Heart left ventricle (tissue), 16 donors: ENCODE measurements at regions of chrX and their contacts with region 1.

Region 1: DNA sequence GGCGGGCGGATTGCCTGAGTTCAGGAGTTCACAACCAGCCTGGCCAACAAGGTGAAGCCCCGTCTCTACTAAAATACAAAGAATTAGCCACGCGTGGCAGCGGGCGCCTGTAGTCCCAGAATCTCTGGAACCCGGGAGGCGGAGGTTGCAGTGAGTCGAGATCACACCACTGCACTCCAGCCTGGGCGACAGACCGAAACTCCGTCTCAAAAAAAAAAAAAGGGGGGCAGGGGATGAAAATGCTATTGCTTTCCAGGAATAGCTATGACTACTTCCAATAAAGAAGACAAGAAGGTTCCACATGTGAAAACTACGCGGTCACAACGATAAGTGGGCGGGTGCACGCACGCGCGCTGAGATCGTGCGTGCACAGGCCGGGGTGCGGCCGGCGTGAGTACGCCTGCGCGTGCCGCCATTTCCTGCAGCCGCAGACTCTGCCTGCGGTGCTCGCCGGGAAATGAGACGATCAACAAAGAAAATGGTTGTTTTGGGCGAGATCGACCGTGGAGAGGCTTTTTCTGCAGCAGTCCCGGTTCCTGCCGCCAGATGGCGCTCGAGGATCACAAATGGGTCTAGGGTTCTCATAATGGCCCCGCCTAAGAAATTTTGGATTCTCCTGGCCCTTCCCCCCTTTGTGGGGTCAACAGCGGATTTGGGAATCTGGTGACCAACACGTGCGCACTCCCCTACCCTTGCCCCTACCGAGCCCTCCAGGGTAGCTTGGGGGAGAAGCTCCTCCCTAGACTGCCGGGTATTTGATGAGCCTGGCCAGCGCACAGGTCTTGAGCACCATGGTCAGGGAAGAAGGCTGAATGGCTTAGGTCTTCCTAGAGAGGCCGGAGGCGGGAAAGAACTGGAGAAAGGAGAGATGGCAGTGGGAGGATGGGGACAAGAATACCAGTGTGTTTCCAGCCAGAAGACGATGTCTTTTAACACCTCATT is 35.1 kb downstream of the PNMA5 start:
- DNase-seq: peak; percentile 85 to 92 (median 88)
- ATAC-seq: peak; percentile 92 to 99 (median 98)
- H3K4me3 ChIP-seq: peak overlapping the region in 10 of 12 donors; percentile 19 to 51 (median 39)
- H3K27ac ChIP-seq: peak overlapping the region in 8 of 12 donors; percentile 47 to 74 (median 55)
- H3K4me1 ChIP-seq: peaks cover 0 to 8% (median 0%) of the 10 kb centered on the region in 12 donors
- H3K27me3 ChIP-seq: peaks cover 0 to 4% (median 0%) of the 10 kb centered on the region in 9 donors
- CTCF ChIP-seq: peak; percentile 71 to 92 (median 80)
- POLR2A ChIP-seq: no peak

Region 2: GRCh38 chrX:152941328-152942106 is 17.3 kb before region 1 on chrX:
- intact Hi-C with region 1: loop called in 1 of 10 experiments (anchors 1 kb)
- DNase-seq: peak; percentile 89 to 94 (median 93)
- ATAC-seq: peak; percentile 93 to 98 (median 94)
- H3K4me3 ChIP-seq: peak overlapping the region; percentile 16 to 71 (median 60)
- H3K27ac ChIP-seq: peak overlapping the region; percentile 5 to 86 (median 80)
- H3K4me1 ChIP-seq: peaks cover 0 to 12% (median 3%) of the 10 kb centered on the region in 12 donors
- H3K27me3 ChIP-seq: peaks cover 0 to 7% (median 0%) of the 10 kb centered on the region in 9 donors
- CTCF ChIP-seq: peak; percentile 63 to 87 (median 80)
- POLR2A ChIP-seq: peak in 1 of 2 donors; percentile 51

Region 3: DNA sequence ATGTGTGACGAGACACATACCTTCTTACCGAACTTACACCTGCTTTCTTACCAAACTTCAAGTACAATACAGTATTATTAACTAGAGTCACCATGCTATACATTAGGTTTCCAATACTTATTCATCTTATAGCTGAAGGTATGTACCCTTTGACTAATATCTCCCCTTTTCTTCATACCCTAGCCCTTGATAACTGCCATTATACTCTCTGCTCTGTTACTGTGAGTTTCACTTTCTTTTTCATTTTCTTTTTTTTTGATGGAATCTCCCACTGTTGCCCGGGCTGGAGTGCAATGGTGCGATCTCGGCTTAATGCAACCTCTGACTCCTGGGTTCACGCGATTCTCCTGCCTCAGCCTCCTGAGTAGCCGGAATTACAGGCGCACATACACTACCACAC is 38.5 kb after region 1 on chrX:
- intact Hi-C with region 1: no loop called
- DNase-seq: no peak
- ATAC-seq: no peak
- H3K4me3 ChIP-seq: no peak overlapping the region
- H3K27ac ChIP-seq: no peak overlapping the region
- H3K4me1 ChIP-seq: no peaks in the 10 kb centered on the region
- H3K27me3 ChIP-seq: no peaks in the 10 kb centered on the region
- CTCF ChIP-seq: no peak
- POLR2A ChIP-seq: no peak

Region 4: GRCh38 chrX:153238361-153238760 is 279.6 kb after region 1 on chrX:
- intact Hi-C with region 1: no loop called
- DNase-seq: no peak
- ATAC-seq: no peak
- H3K4me3 ChIP-seq: no peak overlapping the region
- H3K27ac ChIP-seq: no peak overlapping the region
- H3K4me1 ChIP-seq: no peaks in the 10 kb centered on the region
- H3K27me3 ChIP-seq: peaks cover 0 to 72% (median 0%) of the 10 kb centered on the region in 9 donors
- CTCF ChIP-seq: no peak
- POLR2A ChIP-seq: no peak

Region 5: DNA sequence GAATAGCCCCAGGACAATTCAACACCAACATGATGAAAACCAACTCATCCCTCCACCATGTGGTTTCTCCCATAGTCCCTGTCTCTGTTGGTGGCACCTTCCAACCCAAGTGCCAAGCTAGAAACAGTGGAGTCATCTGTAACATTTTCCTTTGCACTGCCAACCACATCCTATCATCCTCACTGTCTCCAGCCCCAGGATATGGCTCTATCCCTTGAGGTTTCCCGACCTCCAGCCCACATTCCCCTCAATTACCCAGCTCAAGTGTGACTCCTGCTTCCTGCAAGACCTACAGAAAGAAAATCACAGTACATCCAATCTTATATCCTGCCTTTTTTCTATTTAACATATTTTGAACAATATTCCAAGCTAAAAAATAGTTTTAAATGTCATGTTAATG is 338.6 kb after region 1 on chrX:
- intact Hi-C with region 1: no loop called
- DNase-seq: no peak
- ATAC-seq: no peak
- H3K4me3 ChIP-seq: no peak overlapping the region
- H3K27ac ChIP-seq: no peak overlapping the region
- H3K4me1 ChIP-seq: no peaks in the 10 kb centered on the region
- H3K27me3 ChIP-seq: peaks cover 0 to 14% (median 0%) of the 10 kb centered on the region in 9 donors
- CTCF ChIP-seq: no peak
- POLR2A ChIP-seq: no peak

Region 6: GRCh38 chrX:153507484-153508178 is 548.8 kb after region 1 on chrX:
- intact Hi-C with region 1: loop called in 1 of 10 experiments (anchors 10 kb)
- DNase-seq: peak; percentile 75 to 88 (median 79)
- ATAC-seq: peak; percentile 61 to 93 (median 84)
- H3K4me3 ChIP-seq: no peak overlapping the region
- H3K27ac ChIP-seq: peak overlapping the region in 2 of 12 donors; percentile 22 to 24
- H3K4me1 ChIP-seq: peaks cover 0 to 7% (median 0%) of the 10 kb centered on the region in 12 donors
- H3K27me3 ChIP-seq: peaks cover 0 to 4% (median 0%) of the 10 kb centered on the region in 9 donors
- CTCF ChIP-seq: peak; percentile 72 to 93 (median 79)
- POLR2A ChIP-seq: no peak

Region 7: DNA sequence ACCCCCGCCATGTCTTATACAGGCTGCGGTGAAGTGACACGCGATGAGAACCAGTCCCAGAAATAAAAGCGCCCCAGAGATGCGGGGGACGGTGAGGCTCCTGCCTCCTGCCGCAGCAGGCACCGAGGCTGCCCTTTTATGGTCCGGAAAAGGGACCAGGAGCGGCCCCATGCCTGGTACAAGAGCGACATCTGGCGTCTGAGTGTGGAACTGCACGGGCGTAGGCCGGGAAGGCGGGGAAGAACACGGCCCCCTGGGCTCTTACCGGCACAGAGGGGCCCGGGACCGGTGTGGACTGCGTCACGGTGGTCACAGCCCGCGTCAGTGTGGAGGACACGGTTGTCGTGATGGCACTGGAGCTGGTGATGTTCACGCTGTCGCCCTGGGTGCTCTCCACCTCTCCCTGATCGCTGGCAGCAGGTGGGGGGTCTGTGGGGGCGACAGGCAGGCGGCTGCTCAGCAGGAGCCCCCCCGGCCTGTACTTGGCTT is 994.6 kb after region 1 on chrX:
- intact Hi-C with region 1: loop called in 1 of 10 experiments (anchors 2 kb)
- DNase-seq: peak; percentile 60 to 77 (median 65)
- ATAC-seq: peak; percentile 34 to 76 (median 68)
- H3K4me3 ChIP-seq: no peak overlapping the region
- H3K27ac ChIP-seq: peak overlapping the region in 7 of 12 donors; percentile 32 to 86 (median 49)
- H3K4me1 ChIP-seq: peaks cover 0 to 26% (median 5%) of the 10 kb centered on the region in 12 donors
- H3K27me3 ChIP-seq: no peaks in the 10 kb centered on the region
- CTCF ChIP-seq: peak; percentile 78 to 99 (median 88)
- POLR2A ChIP-seq: no peak